CD4-positive, alpha-beta T cell (primary cell): ENCODE measurements at regions of chr2 and their contacts with region 1.

Region 1: GRCh38 chr2:68467077-68467960 is at the starts of genes APLF and FBXO48:
- DNase-seq: peak; percentile 94 to 100 (median 98)
- ATAC-seq: peak; percentile 88
- H3K4me3 ChIP-seq: peak within 1 kb of the TSS; percentile 90
- H3K4me3 Mint-ChIP-seq: peak within 1 kb of the TSS; percentile 95
- H3K27ac ChIP-seq: peak within 1 kb of the TSS; percentile 92 to 93
- H3K27ac Mint-ChIP-seq: peak within 1 kb of the TSS; percentile 89
- H3K4me1 ChIP-seq: peaks cover 24% of the 10 kb centered on the region
- H3K4me1 Mint-ChIP-seq: peaks cover 44% of the 10 kb centered on the region
- H3K27me3 ChIP-seq: no peaks in the 10 kb centered on the region
- H3K27me3 Mint-ChIP-seq: no peaks in the 10 kb centered on the region
- CTCF ChIP-seq: no peak
- total RNA-seq, gene APLF: 4.1 to 4.3 TPM
- total RNA-seq, gene FBXO48: 0.44 to 0.50 TPM

Region 2: DNA sequence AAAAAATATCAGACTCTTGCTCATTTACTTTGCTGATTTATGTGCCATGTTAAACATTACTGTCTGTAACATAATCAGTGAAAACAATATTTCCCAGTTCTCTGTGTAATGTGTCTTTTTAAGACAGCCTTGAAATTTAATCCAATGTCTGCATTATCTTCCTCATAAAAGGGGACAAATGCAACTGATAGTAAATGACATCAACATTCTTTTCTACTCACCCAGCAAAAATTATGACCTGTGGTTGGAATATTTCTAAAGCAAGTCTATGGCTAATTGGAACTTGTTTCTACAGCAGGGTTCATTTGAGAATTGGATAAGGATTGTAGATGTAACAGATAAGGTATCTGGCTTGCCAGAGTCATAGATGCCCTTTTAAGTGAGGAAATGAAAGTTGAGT is 439.4 kb before region 1 on chr2:
- CTCF ChIA-PET with region 1: no interaction called
- POLR2A ChIA-PET with region 1: no interaction called
- intact Hi-C with region 1: no loop called
- DNase-seq: no peak
- ATAC-seq: no peak
- H3K4me3 ChIP-seq: no peak overlapping the region
- H3K4me3 Mint-ChIP-seq: no peak overlapping the region
- H3K27ac ChIP-seq: no peak overlapping the region
- H3K27ac Mint-ChIP-seq: no peak overlapping the region
- H3K4me1 ChIP-seq: no peaks in the 10 kb centered on the region
- H3K4me1 Mint-ChIP-seq: no peaks in the 10 kb centered on the region
- H3K27me3 ChIP-seq: peaks cover 0 to 4% of the 10 kb centered on the region in 2 experiments
- H3K27me3 Mint-ChIP-seq: peaks cover 29% of the 10 kb centered on the region
- CTCF ChIP-seq: no peak

Region 3: GRCh38 chr2:68157402-68158133 is 309.8 kb before region 1 on chr2 and contains the start of gene PNO1:
- CTCF ChIA-PET with region 1: no interaction called
- POLR2A ChIA-PET with region 1: interaction called, 8 read pairs
- intact Hi-C with region 1: loop called in 1 of 2 experiments (anchors 2 kb)
- DNase-seq: peak; percentile 93 to 98 (median 97)
- ATAC-seq: peak; percentile 91
- H3K4me3 ChIP-seq: peak within 1 kb of the TSS; percentile 94
- H3K4me3 Mint-ChIP-seq: peak within 1 kb of the TSS; percentile 96
- H3K27ac ChIP-seq: peak within 1 kb of the TSS; percentile 92 to 99
- H3K27ac Mint-ChIP-seq: peak within 1 kb of the TSS; percentile 98
- H3K4me1 ChIP-seq: peaks cover 26% of the 10 kb centered on the region
- H3K4me1 Mint-ChIP-seq: peaks cover 61% of the 10 kb centered on the region
- H3K27me3 ChIP-seq: no peaks in the 10 kb centered on the region
- H3K27me3 Mint-ChIP-seq: no peaks in the 10 kb centered on the region
- CTCF ChIP-seq: no peak
- total RNA-seq, gene PNO1: 27.1 to 29.5 TPM

Region 4: GRCh38 chr2:68487773-68488355 is 20.5 kb after region 1 on chr2:
- CTCF ChIA-PET with region 1: interaction called, 13 read pairs
- POLR2A ChIA-PET with region 1: interaction called, 4 read pairs
- intact Hi-C with region 1: no loop called
- DNase-seq: peak in 3 of 14 experiments; percentile 48 to 54 (median 52)
- ATAC-seq: peak; percentile 55
- H3K4me3 ChIP-seq: no peak overlapping the region
- H3K4me3 Mint-ChIP-seq: no peak overlapping the region
- H3K27ac ChIP-seq: no peak overlapping the region
- H3K27ac Mint-ChIP-seq: no peak overlapping the region
- H3K4me1 ChIP-seq: no peaks in the 10 kb centered on the region
- H3K4me1 Mint-ChIP-seq: peaks cover 5% of the 10 kb centered on the region
- H3K27me3 ChIP-seq: no peaks in the 10 kb centered on the region
- H3K27me3 Mint-ChIP-seq: no peaks in the 10 kb centered on the region
- CTCF ChIP-seq: peak; percentile 62

Region 5: GRCh38 chr2:68594674-68595492 is 127.6 kb after region 1 on chr2:
- CTCF ChIA-PET with region 1: interaction called, 41 read pairs
- POLR2A ChIA-PET with region 1: interaction called, 9 read pairs
- intact Hi-C with region 1: loop called (anchors 1 kb)
- DNase-seq: peak; percentile 22 to 76 (median 40)
- ATAC-seq: peak; percentile 60
- H3K4me3 ChIP-seq: no peak overlapping the region
- H3K4me3 Mint-ChIP-seq: no peak overlapping the region
- H3K27ac ChIP-seq: no peak overlapping the region
- H3K27ac Mint-ChIP-seq: no peak overlapping the region
- H3K4me1 ChIP-seq: peaks cover 5% of the 10 kb centered on the region
- H3K4me1 Mint-ChIP-seq: peaks cover 6% of the 10 kb centered on the region
- H3K27me3 ChIP-seq: no peaks in the 10 kb centered on the region
- H3K27me3 Mint-ChIP-seq: peaks cover 9% of the 10 kb centered on the region
- CTCF ChIP-seq: peak; percentile 90

Region 6: DNA sequence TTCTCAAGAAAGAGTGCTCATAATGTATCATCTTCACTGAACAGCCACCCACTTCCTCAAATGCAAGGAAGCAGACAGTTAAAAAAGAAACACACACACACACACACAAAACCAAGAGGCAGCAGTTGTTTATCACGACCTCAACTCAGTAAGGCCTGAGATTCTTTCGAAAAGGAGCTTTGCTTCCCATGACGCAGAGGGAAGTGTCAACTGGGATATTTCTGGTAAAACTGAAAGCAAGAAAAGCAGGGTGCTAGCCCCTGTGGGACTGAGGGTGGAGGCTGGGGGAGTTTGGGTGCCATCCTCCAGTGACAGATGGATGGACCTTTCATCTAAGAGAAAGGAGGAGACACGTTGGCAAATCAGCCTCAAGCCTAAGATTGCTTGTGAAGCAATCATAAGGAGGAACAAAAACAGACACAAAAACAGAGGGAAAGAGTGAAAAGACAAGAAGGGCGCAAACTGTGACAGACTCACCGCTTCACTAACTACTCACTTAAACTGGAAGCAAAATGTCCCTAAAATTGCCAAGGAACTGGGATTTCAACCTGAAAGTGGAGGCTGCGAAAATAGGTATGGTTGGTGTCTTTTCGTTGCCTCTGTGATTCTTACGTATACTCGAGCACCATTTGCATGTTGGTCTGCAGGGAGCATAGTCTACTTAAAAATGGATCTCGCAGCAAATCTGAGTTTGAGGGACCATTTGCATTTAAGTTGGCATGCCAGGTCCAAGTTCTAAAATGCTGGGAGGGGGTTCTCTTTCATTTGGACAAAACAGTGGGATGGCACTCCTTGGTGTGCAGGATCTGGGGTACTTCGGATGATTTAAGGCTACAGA is 267.6 kb after region 1 on chr2 and contains the start of gene ARHGAP25:
- CTCF ChIA-PET with region 1: interaction called, 3 read pairs
- POLR2A ChIA-PET with region 1: interaction called, 9 read pairs
- intact Hi-C with region 1: loop called in 1 of 2 experiments (anchors 5 kb)
- DNase-seq: peak in 10 of 14 experiments; percentile 23 to 87 (median 45)
- ATAC-seq: peak; percentile 71
- H3K4me3 ChIP-seq: peak within 1 kb of the TSS; percentile 73
- H3K4me3 Mint-ChIP-seq: no peak within 1 kb of the TSS
- H3K27ac ChIP-seq: peak within 1 kb of the TSS; percentile 72 to 81
- H3K27ac Mint-ChIP-seq: no peak within 1 kb of the TSS
- H3K4me1 ChIP-seq: peaks cover 49% of the 10 kb centered on the region
- H3K4me1 Mint-ChIP-seq: peaks cover 40% of the 10 kb centered on the region
- H3K27me3 ChIP-seq: no peaks in the 10 kb centered on the region
- H3K27me3 Mint-ChIP-seq: no peaks in the 10 kb centered on the region
- CTCF ChIP-seq: no peak
- total RNA-seq, gene ARHGAP25: 39.3 to 41.8 TPM

Region 7: GRCh38 chr2:68909793-68910674 is 442.7 kb after region 1 on chr2:
- CTCF ChIA-PET with region 1: interaction called, 16 read pairs
- POLR2A ChIA-PET with region 1: interaction called, 27 read pairs
- intact Hi-C with region 1: loop called (anchors 1 to 2 kb)
- DNase-seq: peak; percentile 44 to 84 (median 66)
- ATAC-seq: no peak
- H3K4me3 ChIP-seq: no peak overlapping the region
- H3K4me3 Mint-ChIP-seq: no peak overlapping the region
- H3K27ac ChIP-seq: no peak overlapping the region
- H3K27ac Mint-ChIP-seq: no peak overlapping the region
- H3K4me1 ChIP-seq: peaks cover 60% of the 10 kb centered on the region
- H3K4me1 Mint-ChIP-seq: peaks cover 36% of the 10 kb centered on the region
- H3K27me3 ChIP-seq: no peaks in the 10 kb centered on the region
- H3K27me3 Mint-ChIP-seq: no peaks in the 10 kb centered on the region
- CTCF ChIP-seq: peak; percentile 88

Region 8: DNA sequence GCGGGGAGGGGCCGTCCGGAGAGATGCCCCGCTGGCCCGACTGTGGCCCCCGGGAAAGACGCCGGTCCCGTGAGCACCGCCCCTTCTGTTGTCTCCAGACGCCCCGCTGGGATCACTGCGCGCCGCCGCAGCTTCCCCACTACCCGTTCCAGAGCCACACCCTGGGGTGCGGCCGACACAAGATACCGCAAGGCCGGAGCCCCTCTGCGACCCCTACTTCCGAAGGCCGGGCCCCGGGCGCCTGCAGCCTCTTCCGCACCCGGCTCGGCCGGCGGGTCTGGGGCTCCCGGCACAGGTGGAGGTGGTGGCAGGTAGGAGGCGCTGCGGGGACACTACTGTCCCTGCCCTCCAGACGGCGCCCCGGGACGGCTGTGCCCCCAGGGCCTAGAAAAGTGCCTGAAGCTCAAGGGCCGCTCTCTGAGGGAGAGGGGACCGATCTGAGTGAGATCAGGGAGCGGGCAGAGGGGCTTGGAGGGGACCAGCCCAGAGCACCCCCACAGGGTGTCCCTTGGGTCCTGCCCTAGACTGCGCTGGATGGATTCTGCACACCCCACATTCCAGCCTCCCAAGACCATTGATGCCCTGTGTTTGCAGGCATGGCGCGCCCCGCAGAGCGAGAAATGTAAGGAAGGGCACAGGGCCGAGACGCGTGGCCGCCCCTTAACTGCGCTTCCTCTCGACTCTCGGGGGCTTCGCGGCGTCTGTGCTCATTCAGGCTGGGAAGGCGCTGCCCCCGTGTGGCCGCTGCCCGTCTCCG is 839.7 kb after region 1 on chr2:
- CTCF ChIA-PET with region 1: no interaction called
- POLR2A ChIA-PET with region 1: interaction called, 3 read pairs
- intact Hi-C with region 1: loop called (anchors 2 to 5 kb)
- DNase-seq: peak; percentile 30 to 74 (median 46)
- ATAC-seq: peak; percentile 81
- H3K4me3 ChIP-seq: peak overlapping the region; percentile 56
- H3K4me3 Mint-ChIP-seq: peak overlapping the region; percentile 58
- H3K27ac ChIP-seq: no peak overlapping the region
- H3K27ac Mint-ChIP-seq: no peak overlapping the region
- H3K4me1 ChIP-seq: peaks cover 31% of the 10 kb centered on the region
- H3K4me1 Mint-ChIP-seq: peaks cover 31% of the 10 kb centered on the region
- H3K27me3 ChIP-seq: peaks cover 18 to 29% of the 10 kb centered on the region in 2 experiments
- H3K27me3 Mint-ChIP-seq: peaks cover 32% of the 10 kb centered on the region
- CTCF ChIP-seq: peak; percentile 79